SK-N-SH (cell line): ENCODE measurements at regions of chr4 and their contacts with region 1.

Region 1: DNA sequence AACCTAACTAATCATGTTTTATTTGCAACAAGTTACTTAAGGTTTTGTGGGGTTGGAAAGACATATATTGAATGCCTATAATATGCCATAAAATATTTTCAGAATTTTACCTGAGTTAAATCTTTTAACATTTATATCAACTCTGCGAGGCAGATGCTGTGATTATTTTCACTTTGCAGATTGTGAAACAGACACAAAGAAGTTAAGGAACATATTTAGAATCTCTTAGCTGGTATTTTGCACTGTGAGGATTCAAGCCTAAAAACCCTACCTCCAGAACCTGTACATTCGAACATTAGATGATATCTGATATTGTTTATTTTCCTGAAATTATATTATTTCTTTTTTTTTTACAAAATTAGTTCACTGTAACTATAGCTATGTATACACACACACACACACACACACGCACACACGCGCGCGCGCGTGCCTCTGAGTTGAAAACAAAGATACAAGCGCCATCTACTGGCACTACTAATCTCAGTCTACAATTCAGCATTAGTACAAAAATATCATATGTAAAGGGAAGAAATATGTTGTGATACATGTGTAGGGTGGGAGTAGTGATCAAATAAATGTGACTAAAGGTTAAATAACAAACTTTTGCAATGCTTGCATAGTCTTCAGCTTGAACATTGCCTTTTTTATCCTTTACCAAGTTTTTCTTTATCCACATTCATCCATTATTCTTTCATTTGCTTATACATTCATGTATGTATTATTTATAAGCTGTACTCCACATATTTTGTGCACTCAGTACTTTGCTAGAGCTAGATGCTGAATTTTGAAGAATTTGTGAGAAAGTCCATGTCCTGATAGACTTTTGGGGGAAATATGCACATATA is 61.5 kb downstream of the ANXA10 start:
- DNase-seq: peak; percentile 30
- H3K4me3 ChIP-seq: peak overlapping the region in 1 of 2 experiments; percentile 2; a peak in 2 of 4 replicates
- H3K27ac ChIP-seq: no peak overlapping the region
- H3K4me1 ChIP-seq: no peaks in the 10 kb centered on the region
- H3K27me3 ChIP-seq: no peaks in the 10 kb centered on the region
- CTCF ChIP-seq: peak; percentile 94
- EP300 ChIP-seq: no peak
- RAD21 ChIP-seq: peak; percentile 73

Region 2: DNA sequence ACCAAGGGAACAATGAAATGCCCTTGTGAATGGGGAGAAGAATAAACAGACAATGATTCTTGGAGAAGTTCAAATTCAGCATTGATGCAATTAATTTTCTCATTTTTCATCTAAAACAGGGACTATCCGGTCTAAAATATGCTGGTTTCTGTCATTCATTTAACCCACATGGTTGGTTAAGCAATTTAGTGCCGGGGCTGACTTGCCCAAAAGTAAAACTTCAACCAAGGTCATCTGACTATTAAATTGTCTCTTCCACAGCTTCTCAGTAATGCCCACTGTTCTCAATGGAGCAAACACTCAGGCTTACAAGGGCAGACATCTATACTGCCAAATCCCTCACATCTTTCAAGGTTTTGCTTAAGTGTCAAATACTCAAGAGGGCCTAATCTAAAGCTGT is 10.2 kb before region 1 on chr4:
- CTCF ChIA-PET with region 1: interaction called, 17 read pairs
- POLR2A ChIA-PET with region 1: no interaction called
- DNase-seq: no peak
- H3K4me3 ChIP-seq: no peak overlapping the region
- H3K27ac ChIP-seq: no peak overlapping the region
- H3K4me1 ChIP-seq: peaks cover 0 to 8% of the 10 kb centered on the region in 2 experiments; a peak in 2 of 4 replicates
- H3K27me3 ChIP-seq: no peaks in the 10 kb centered on the region
- CTCF ChIP-seq: no peak
- EP300 ChIP-seq: no peak
- RAD21 ChIP-seq: no peak

Region 3: DNA sequence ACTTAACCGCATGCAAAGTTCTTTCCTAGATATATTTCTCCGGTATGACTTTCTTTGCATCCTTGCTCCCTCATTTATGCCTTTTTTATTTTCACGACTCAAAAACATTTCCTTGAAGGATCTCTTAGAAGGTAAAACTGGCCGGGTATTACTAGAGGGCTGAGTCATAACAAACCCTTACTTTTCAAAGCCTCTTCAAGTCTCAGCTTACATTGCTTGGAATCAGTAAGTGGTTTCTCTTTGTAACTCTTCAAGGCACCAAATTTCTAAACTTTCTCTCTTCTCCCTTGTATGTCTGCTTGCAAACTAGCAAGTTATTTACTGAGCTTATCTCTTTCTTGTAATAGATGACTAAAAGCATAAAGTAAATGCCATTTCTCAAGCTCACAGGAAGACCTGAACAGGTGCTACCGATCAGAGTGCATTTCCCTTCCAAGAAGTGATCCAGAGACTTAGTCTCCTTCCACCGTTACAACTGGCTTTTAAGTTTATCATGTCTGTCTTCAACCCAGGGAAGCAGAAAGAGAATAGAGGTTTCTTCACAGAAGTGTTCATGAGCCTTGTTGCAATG is 14.0 kb after region 1 on chr4:
- CTCF ChIA-PET with region 1: interaction called, 10 read pairs
- POLR2A ChIA-PET with region 1: no interaction called
- DNase-seq: no peak
- H3K4me3 ChIP-seq: no peak overlapping the region
- H3K27ac ChIP-seq: no peak overlapping the region
- H3K4me1 ChIP-seq: no peaks in the 10 kb centered on the region
- H3K27me3 ChIP-seq: no peaks in the 10 kb centered on the region
- CTCF ChIP-seq: no peak
- EP300 ChIP-seq: no peak
- RAD21 ChIP-seq: no peak